ENCODE measurements at regions of chr2 and their contacts with region 1.

Region 1: GRCh38 chr2:159286709-159287441 is 372 bp upstream of the WDSUB1 start:
- DNase-seq: peak; percentile 89
- ATAC-seq: peak; percentile 99
- H3K4me3 ChIP-seq: peak overlapping the region; percentile 59
- H3K27ac ChIP-seq: peak overlapping the region; percentile 92
- H3K4me1 ChIP-seq: peaks cover 5% of the 10 kb centered on the region
- H3K27me3 ChIP-seq: no peaks in the 10 kb centered on the region
- CTCF ChIP-seq: no peak
- POLR2A ChIP-seq: no peak
- RAD21 ChIP-seq: no peak

Region 2: GRCh38 chr2:159137511-159138241 is 149.2 kb before region 1 on chr2:
- CTCF ChIA-PET with region 1: no interaction called
- POLR2A ChIA-PET with region 1: no interaction called
- dilution Hi-C with region 1: no loop called
- in situ Hi-C with region 1: no loop called
- intact Hi-C with region 1: loop called (anchors 5 kb)
- DNase-seq: no peak
- ATAC-seq: no peak
- H3K4me3 ChIP-seq: no peak overlapping the region
- H3K27ac ChIP-seq: peak overlapping the region; percentile 95
- H3K4me1 ChIP-seq: peaks cover 31% of the 10 kb centered on the region
- H3K27me3 ChIP-seq: no peaks in the 10 kb centered on the region
- CTCF ChIP-seq: no peak
- POLR2A ChIP-seq: no peak
- RAD21 ChIP-seq: no peak

Region 3: DNA sequence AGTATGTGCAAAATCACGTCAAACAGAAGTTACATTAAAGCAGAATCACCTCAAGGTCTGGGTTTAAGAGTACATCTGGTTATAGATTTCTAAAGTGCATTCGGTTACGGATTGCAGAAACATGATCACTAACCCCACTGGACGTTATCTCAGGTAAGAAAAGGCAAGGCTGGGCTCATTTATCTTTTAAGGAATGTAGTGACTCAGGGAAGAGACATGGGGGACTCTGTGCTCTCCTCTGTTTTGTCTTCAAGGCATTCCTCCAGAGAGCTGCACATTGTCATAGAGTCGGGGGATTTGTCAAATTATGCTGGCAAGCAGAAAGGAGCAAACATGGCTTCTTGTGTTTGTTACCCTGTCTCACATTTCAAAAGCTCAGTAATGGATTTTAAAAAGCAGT is 14.7 kb before region 1 on chr2:
- CTCF ChIA-PET with region 1: no interaction called
- POLR2A ChIA-PET with region 1: no interaction called
- dilution Hi-C with region 1: no loop called
- in situ Hi-C with region 1: no loop called
- intact Hi-C with region 1: no loop called
- DNase-seq: no peak
- ATAC-seq: no peak
- H3K4me3 ChIP-seq: no peak overlapping the region
- H3K27ac ChIP-seq: no peak overlapping the region
- H3K4me1 ChIP-seq: peaks cover 4% of the 10 kb centered on the region; the same call in 1 of the 2 replicates
- H3K27me3 ChIP-seq: no peaks in the 10 kb centered on the region
- CTCF ChIP-seq: no peak
- POLR2A ChIP-seq: no peak
- RAD21 ChIP-seq: no peak

Measured in IMR-90 (cell line).